ENCODE measurements at regions of chr5 and their contacts with region 1.

Region 1: DNA sequence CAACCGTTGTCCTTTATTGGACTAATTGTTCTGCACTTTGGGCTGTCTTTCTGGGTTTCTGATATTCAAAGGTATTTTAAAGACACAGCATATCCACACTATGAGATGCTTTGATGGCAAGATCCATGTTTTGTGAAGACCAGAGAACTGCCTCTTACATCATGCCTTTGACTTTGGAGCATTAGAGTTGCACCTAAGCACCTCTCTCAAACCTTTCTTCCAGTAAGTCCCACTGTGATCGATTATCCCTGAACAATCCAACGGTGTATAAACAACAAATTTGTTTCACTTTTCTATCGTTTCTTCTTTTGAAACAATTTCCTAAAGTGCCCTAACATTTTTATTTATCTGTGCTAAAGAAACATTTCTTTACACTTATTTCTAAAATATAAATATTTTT is 144.4 kb downstream of the KCTD16 start:
- DNase-seq: no peak
- ATAC-seq: no peak
- H3K4me3 ChIP-seq: no peak overlapping the region
- H3K27ac ChIP-seq: no peak overlapping the region
- H3K4me1 ChIP-seq: no peaks in the 10 kb centered on the region
- H3K27me3 ChIP-seq: peaks cover 19% of the 10 kb centered on the region
- CTCF ChIP-seq: no peak

Region 2: DNA sequence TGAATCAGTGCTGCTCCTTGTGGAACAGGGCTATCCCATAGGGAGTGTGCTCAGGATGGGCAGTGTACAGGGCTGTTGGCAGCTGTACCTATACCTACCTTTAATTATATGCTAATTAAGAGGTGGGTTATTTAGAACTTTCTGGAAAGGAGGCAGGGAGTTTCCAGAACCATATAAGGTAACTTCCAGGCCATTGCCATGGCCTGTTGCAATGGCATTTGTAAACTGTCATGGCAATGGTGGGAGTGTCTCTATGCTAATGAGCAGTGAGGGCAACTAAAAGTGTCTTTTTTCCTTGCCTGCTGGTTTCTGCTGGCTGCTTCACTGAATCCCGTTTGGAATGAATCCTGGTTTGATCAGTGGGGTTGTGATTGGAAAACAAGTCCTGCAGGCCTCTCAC is 1547.1 kb before region 1 on chr5:
- CTCF ChIA-PET with region 1: no interaction called
- POLR2A ChIA-PET with region 1: no interaction called
- intact Hi-C with region 1: no loop called
- DNase-seq: no peak
- ATAC-seq: no peak
- H3K4me3 ChIP-seq: no peak overlapping the region
- H3K27ac ChIP-seq: no peak overlapping the region
- H3K4me1 ChIP-seq: peaks cover 12% of the 10 kb centered on the region
- H3K27me3 ChIP-seq: no peaks in the 10 kb centered on the region
- CTCF ChIP-seq: no peak

Region 3: GRCh38 chr5:145689235-145689634 is 1374.2 kb after region 1 on chr5:
- CTCF ChIA-PET with region 1: interaction called, 10 read pairs
- POLR2A ChIA-PET with region 1: no interaction called
- intact Hi-C with region 1: no loop called
- DNase-seq: no peak
- ATAC-seq: no peak
- H3K4me3 ChIP-seq: no peak overlapping the region
- H3K27ac ChIP-seq: no peak overlapping the region
- H3K4me1 ChIP-seq: no peaks in the 10 kb centered on the region
- H3K27me3 ChIP-seq: no peaks in the 10 kb centered on the region
- CTCF ChIP-seq: no peak

Measured in PC-3 (cell line).